Naive thymus-derived CD8-positive, alpha-beta T cell (primary cell): ENCODE measurements at regions of chr2 and their contacts with region 1.

Region 1: GRCh38 chr2:71331581-71332434 is at the start of gene ZNF638:
- DNase-seq: peak; percentile 87 to 98 (median 92)
- ATAC-seq: peak; percentile 94 to 95
- H3K4me3 Mint-ChIP-seq: peak within 1 kb of the TSS; percentile 96 to 100 (median 100)
- H3K27ac Mint-ChIP-seq: peak within 1 kb of the TSS; percentile 99 to 100 (median 100)
- H3K4me1 Mint-ChIP-seq: peaks cover 13 to 55% (median 38%) of the 10 kb centered on the region in 4 donors
- H3K27me3 Mint-ChIP-seq: peaks cover 0 to 2% (median 0%) of the 10 kb centered on the region in 5 donors
- polyA plus RNA-seq, gene ZNF638: 40.7 to 52.4 (median 51.9) TPM

Region 2: DNA sequence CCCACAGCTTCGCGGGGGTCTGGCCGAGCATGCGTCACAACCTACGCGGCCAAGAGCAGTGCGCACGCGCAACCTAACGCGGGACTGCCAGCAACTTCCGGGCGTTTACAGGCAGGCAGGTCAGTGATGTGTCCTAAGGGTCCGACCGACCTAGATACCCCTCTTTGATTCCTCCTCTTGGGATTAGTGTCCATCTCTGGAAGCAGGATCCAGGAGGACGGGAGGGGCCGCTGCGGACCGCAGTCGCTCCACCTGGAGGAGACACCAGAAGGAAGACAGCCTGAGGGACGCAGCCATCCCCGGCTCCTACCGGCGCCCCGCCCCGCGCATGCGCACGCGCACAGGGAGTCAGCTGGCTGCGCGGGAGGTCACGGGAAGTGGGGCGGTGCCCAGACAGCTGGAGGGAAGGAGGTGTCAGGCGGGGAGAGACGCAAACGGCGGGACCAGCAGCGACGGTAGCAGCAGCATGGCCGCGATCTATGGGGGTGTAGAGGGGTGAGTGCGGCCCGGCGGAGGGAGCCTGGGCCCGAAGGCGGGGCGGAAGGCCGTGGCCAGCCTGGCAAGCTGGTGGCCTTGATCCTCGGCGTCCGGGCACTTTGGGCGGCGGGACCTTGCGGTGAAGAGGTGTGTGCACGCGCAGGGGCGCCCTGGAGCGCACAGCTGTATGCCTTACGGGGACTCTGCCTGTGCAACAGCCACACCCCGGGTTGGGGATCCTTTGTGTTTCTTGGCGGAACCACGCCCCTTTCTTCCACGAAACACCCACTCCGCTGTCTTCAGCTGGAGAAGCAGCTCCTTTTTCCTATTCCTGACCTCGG is 263.4 kb before region 1 on chr2 and contains the start of gene NAGK:
- POLR2A ChIA-PET with region 1: interaction called, 25 read pairs
- DNase-seq: peak; percentile 96 to 100 (median 98)
- ATAC-seq: peak; percentile 81 to 85
- H3K4me3 Mint-ChIP-seq: peak within 1 kb of the TSS; percentile 90 to 99 (median 94)
- H3K27ac Mint-ChIP-seq: peak within 1 kb of the TSS; percentile 98 to 100 (median 99)
- H3K4me1 Mint-ChIP-seq: peaks cover 27 to 84% (median 62%) of the 10 kb centered on the region in 4 donors
- H3K27me3 Mint-ChIP-seq: peaks cover 0 to 1% (median 0%) of the 10 kb centered on the region in 5 donors
- polyA plus RNA-seq, gene NAGK: 33.7 to 51.1 (median 43.6) TPM

Region 3: GRCh38 chr2:71226965-71227560 is 104.7 kb before region 1 on chr2 and contains the start of gene PAIP2B:
- POLR2A ChIA-PET with region 1: interaction called, 11 read pairs
- DNase-seq: peak; percentile 93 to 99 (median 98)
- ATAC-seq: peak; percentile 90 to 91
- H3K4me3 Mint-ChIP-seq: peak within 1 kb of the TSS; percentile 93 to 99 (median 97)
- H3K27ac Mint-ChIP-seq: peak within 1 kb of the TSS; percentile 82 to 99 (median 96)
- H3K4me1 Mint-ChIP-seq: peaks cover 10 to 35% (median 27%) of the 10 kb centered on the region in 4 donors
- H3K27me3 Mint-ChIP-seq: peaks cover 0 to 11% (median 2%) of the 10 kb centered on the region in 5 donors
- polyA plus RNA-seq, gene PAIP2B: 1.9 to 2.5 (median 2.2) TPM

Region 4: GRCh38 chr2:71299507-71299906 is 32.3 kb before region 1 on chr2:
- POLR2A ChIA-PET with region 1: interaction called, 13 read pairs
- DNase-seq: peak in 3 of 10 donors; percentile 44 to 54 (median 47)
- ATAC-seq: no peak
- H3K4me3 Mint-ChIP-seq: no peak overlapping the region
- H3K27ac Mint-ChIP-seq: no peak overlapping the region
- H3K4me1 Mint-ChIP-seq: no peaks in the 10 kb centered on the region
- H3K27me3 Mint-ChIP-seq: peaks cover 0 to 4% (median 2%) of the 10 kb centered on the region in 5 donors

Region 5: DNA sequence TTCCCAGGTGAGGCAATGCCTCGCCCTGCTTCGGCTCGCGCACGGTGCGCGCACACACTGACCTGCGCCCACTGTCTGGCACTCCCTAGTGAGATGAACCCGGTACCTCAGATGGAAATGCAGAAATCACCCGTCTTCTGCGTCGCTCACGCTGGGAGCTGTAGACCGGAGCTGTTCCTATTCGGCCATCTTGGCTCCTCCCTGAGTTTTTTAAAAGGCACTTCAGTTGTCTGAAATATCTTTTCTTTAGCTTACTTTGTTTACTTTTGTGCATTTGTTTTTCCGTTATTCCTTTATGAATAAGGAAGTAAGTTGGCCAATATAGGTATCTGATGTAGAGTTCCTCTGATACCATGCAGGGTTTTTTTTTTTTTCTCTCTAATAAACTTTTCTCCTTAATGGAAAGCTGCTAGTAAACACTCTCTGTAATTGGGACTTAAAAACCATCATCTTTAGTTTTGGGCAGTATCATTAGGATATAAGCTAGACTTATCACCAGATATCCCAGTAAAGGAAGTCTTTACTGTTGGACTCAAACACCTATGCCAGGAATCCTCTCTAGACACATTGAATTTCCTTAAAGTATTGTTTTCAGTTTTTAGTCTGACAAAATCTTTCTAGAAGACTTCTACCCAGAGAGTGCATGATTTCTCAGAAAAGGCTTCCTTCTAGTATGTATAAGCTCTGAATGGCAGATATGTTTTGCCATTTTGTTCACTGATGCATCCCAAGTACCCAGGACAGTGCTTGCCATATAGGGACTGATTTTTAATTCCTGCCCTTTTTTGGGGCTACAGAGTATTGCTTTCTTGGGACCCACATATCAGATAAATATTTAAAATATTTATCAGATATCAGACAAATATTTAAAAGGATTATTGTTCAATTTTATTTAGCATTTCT is 85.7 kb after region 1 on chr2:
- POLR2A ChIA-PET with region 1: interaction called, 13 read pairs
- DNase-seq: peak in 1 of 10 donors; percentile 28
- ATAC-seq: peak; percentile 40 to 60
- H3K4me3 Mint-ChIP-seq: peak overlapping the region; percentile 84 to 94 (median 90)
- H3K27ac Mint-ChIP-seq: peak overlapping the region; percentile 76 to 97 (median 94)
- H3K4me1 Mint-ChIP-seq: peaks cover 4 to 21% (median 9%) of the 10 kb centered on the region in 4 donors
- H3K27me3 Mint-ChIP-seq: no peaks in the 10 kb centered on the region

Region 6: GRCh38 chr2:71531522-71532047 is 199.8 kb after region 1 on chr2:
- POLR2A ChIA-PET with region 1: no interaction called
- DNase-seq: no peak
- ATAC-seq: no peak
- H3K4me3 Mint-ChIP-seq: no peak overlapping the region
- H3K27ac Mint-ChIP-seq: no peak overlapping the region
- H3K4me1 Mint-ChIP-seq: no peaks in the 10 kb centered on the region
- H3K27me3 Mint-ChIP-seq: peaks cover 18 to 66% (median 41%) of the 10 kb centered on the region in 5 donors